ENCODE measurements at regions of chr12 and their contacts with region 1.

Region 1: DNA sequence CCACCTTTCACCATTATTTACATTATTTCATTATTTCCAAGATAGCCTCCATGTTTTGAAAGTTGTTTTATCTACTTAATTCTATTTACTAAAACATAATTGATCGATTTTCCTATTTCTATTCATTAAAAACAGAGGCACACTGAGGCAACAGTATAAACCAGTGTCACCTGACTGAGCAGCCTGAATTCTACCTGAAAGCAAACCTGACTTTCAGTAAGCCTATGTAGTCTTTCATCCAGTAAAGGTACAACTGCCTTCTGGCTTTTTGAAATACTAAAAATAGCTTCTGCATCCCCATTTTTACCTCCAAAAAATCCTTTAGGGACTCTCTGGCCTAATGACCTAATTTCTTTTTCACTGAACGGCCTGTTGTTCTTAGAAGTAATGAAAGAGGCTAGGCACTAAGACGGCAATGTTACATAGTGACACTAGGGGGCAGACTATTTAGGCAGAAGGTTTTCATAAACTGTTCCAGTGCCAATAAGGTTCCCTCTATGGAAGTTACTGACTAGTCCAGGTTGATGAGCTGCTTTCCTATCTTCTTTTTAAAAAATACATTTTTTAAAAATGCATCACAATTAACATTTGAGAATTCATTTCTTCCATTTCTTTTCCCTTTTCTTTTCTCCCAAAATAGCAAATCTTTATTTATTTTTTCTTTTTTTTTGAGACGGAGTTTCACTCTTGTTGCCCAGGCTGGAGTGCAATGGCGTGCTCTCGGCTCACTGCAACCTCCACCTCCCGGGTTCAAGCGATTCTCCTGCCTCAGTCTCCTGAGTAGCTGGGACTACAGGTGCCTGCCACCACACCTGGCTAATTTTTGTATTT is 17.5 kb downstream of the ANAPC5 start:
- DNase-seq: no peak
- ATAC-seq: peak; percentile 80 to 97 (median 90)
- H3K4me3 ChIP-seq: no peak overlapping the region
- H3K27ac ChIP-seq: no peak overlapping the region
- H3K4me1 ChIP-seq: no peaks in the 10 kb centered on the region
- H3K27me3 ChIP-seq: no peaks in the 10 kb centered on the region
- CTCF ChIP-seq: peak; percentile 84

Region 2: DNA sequence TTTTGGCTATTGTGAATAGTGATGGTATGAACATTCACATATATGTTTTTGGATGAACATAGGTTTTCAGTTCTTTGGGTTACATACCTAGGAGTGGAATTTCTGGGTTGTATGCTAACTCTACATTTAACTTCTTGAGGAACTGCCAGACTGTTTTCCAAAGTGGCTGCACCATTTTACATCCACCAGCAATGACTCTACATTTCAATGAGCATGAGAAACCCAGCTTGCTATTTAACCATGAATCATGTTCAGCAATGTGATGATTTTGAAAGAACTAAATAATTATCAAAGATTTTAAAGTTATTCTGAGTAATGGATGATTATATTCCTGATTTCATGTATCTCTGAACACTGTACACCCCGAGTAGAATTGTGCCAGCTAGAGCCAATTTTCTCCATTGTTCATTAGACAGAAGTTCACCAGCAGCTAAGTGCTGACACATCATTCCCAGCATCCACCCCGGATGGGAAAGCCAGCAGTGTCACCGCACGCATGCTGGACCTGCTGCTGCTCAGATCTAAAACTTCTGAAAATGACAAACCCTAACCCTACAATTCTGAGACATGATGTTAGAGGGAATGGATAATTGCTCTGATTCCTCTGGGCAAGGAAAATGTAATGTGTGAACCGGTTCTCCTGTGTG is 30.8 kb after region 1 on chr12:
- intact Hi-C with region 1: no loop called
- DNase-seq: no peak
- ATAC-seq: no peak
- H3K4me3 ChIP-seq: no peak overlapping the region
- H3K27ac ChIP-seq: no peak overlapping the region
- H3K4me1 ChIP-seq: peaks cover 7% of the 10 kb centered on the region
- H3K27me3 ChIP-seq: no peaks in the 10 kb centered on the region
- CTCF ChIP-seq: no peak

Region 3: GRCh38 chr12:121443193-121443870 is 108.6 kb after region 1 on chr12:
- intact Hi-C with region 1: loop called (anchors 1 to 2 kb)
- DNase-seq: peak; percentile 85 to 95
- ATAC-seq: peak; percentile 92 to 96 (median 96)
- H3K4me3 ChIP-seq: no peak overlapping the region
- H3K27ac ChIP-seq: no peak overlapping the region
- H3K4me1 ChIP-seq: peaks cover 5% of the 10 kb centered on the region
- H3K27me3 ChIP-seq: no peaks in the 10 kb centered on the region
- CTCF ChIP-seq: peak; percentile 87